ENCODE measurements at regions of chr3 and their contacts with region 1.

Region 1: GRCh38 chr3:4826237-4827100 is 152.8 kb upstream of the BHLHE40 start:
- DNase-seq: no peak
- ATAC-seq: peak; percentile 9
- H3K4me3 ChIP-seq: no peak overlapping the region
- H3K27ac ChIP-seq: no peak overlapping the region
- H3K4me1 ChIP-seq: peaks cover 21% of the 10 kb centered on the region
- H3K27me3 ChIP-seq: no peaks in the 10 kb centered on the region
- CTCF ChIP-seq: no peak
- EP300 ChIP-seq: no peak
- POLR2A ChIP-seq: peak; percentile 31; the same call in 1 of the 2 replicates
- RAD21 ChIP-seq: no peak

Region 2: DNA sequence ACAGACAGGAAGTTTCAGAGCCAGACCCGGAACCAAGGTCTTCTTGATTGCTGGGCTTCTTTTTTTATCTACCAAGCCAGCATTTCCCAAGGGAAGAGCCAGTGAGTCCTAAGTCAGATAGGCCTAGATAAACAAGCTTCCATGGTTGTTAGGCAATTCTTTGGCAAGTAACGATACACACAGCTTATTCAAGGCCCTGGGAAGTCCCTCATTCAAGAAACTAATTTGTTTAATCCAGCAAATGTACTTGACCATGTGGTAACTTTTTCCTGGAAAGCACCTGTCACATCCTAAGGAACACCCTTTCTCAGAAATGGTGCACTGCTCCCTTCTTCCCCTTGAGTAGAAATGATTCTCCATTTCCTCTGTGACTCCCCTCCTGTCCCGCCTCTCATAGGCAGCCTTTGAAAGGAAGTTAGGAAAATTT is 123.4 kb before region 1 on chr3:
- CTCF ChIA-PET with region 1: no interaction called
- POLR2A ChIA-PET with region 1: no interaction called
- RAD21 ChIA-PET with region 1: no interaction called
- SMC1A ChIA-PET with region 1: no interaction called
- in situ Hi-C with region 1: no loop called
- intact Hi-C with region 1: no loop called
- DNase-seq: no peak
- ATAC-seq: no peak
- H3K4me3 ChIP-seq: no peak overlapping the region
- H3K27ac ChIP-seq: no peak overlapping the region
- H3K4me1 ChIP-seq: no peaks in the 10 kb centered on the region
- H3K27me3 ChIP-seq: no peaks in the 10 kb centered on the region
- CTCF ChIP-seq: no peak
- EP300 ChIP-seq: no peak
- POLR2A ChIP-seq: no peak
- RAD21 ChIP-seq: no peak

Region 3: DNA sequence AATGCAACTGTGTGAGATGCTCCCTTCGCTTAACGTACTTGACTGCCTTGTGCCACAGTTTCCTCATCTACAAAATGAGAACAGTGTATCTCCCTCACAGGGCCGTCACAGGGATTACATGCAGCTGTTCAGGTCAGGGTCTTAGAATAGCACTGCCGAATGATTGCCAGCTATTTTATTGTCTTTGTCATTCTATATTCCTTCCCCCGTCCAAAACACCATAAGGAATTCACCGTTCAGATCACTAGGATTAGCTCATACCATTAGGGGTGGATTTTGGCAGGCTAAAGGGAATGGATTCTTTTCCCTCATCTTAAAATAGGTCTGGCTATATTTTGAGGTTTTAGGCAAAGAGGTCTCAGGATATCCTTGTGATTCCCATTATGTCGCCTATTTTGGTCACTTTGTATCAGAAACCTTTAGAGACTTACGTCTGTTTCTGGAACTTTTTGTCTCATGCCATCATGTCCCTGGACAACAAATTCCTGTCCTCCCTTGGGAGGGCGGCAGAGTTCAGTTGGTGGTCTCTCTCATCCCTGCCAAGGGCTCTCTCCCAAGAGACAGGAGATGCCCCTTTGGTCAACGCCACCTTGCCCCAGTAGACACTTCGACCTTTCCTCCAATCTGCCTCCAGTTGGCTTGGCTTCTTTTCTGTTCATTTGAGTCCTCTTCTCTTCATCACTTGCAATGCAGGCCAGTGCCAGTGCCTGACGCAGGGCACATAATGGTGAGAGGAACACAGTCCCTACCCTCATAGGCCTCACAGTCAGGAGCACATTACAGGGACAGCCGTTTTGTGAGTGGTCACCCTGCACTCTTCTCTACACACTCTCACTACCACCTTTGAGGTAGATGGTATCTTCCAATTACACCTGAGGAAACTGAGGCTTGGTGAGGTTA is 18.8 kb before region 1 on chr3:
- CTCF ChIA-PET with region 1: interaction called, 3 read pairs
- POLR2A ChIA-PET with region 1: no interaction called
- RAD21 ChIA-PET with region 1: no interaction called
- SMC1A ChIA-PET with region 1: interaction called, 11 read pairs
- in situ Hi-C with region 1: no loop called
- intact Hi-C with region 1: no loop called
- DNase-seq: no peak
- ATAC-seq: no peak
- H3K4me3 ChIP-seq: no peak overlapping the region
- H3K27ac ChIP-seq: no peak overlapping the region
- H3K4me1 ChIP-seq: no peaks in the 10 kb centered on the region
- H3K27me3 ChIP-seq: no peaks in the 10 kb centered on the region
- CTCF ChIP-seq: no peak
- EP300 ChIP-seq: no peak
- POLR2A ChIP-seq: no peak
- RAD21 ChIP-seq: no peak